B cell (primary cell): ENCODE measurements at regions of chr15 and their contacts with region 1.

Region 1: GRCh38 chr15:31265871-31266711 is 60.5 kb upstream of the KLF13 start:
- DNase-seq: peak; percentile 80
- ATAC-seq: peak; percentile 64
- H3K4me3 ChIP-seq: peak overlapping the region in 4 of 5 experiments; percentile 2 to 37 (median 4)
- H3K4me3 Mint-ChIP-seq: peak overlapping the region; percentile 79
- H3K27ac ChIP-seq: peak overlapping the region; percentile 78 to 90
- H3K27ac Mint-ChIP-seq: peak overlapping the region; percentile 96
- H3K4me1 ChIP-seq: peaks cover 70 to 79% of the 10 kb centered on the region in 2 donors
- H3K4me1 Mint-ChIP-seq: peaks cover 79% of the 10 kb centered on the region
- H3K27me3 ChIP-seq: no peaks in the 10 kb centered on the region
- H3K27me3 Mint-ChIP-seq: no peaks in the 10 kb centered on the region
- CTCF ChIP-seq: no peak

Region 2: DNA sequence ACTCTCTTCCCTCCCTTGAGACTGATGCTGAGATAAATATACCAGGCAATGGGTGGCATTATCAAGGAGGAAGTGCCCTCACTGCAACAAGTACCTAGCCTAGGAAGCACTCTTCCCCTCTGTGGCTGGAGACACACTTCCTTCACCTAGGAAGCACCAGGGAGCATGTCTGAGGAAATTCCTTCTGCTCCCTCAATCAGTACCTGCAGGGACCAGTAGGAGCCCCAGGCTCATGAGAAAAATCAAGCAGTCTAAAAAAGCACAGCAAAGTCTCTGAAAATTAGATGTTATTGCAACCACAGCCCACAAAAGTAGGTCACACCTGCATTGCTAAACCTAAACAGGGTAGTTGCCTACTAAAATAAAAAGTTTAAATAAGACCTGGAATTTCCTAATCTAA is 86.4 kb before region 1 on chr15:
- CTCF ChIA-PET with region 1: no interaction called
- POLR2A ChIA-PET with region 1: no interaction called
- intact Hi-C with region 1: no loop called
- DNase-seq: no peak
- ATAC-seq: no peak
- H3K4me3 ChIP-seq: no peak overlapping the region
- H3K4me3 Mint-ChIP-seq: no peak overlapping the region
- H3K27ac ChIP-seq: no peak overlapping the region
- H3K27ac Mint-ChIP-seq: peak overlapping the region; percentile 7
- H3K4me1 ChIP-seq: no peaks in the 10 kb centered on the region
- H3K4me1 Mint-ChIP-seq: peaks cover 2% of the 10 kb centered on the region
- H3K27me3 ChIP-seq: no peaks in the 10 kb centered on the region
- H3K27me3 Mint-ChIP-seq: peaks cover 7% of the 10 kb centered on the region
- CTCF ChIP-seq: no peak

Region 3: DNA sequence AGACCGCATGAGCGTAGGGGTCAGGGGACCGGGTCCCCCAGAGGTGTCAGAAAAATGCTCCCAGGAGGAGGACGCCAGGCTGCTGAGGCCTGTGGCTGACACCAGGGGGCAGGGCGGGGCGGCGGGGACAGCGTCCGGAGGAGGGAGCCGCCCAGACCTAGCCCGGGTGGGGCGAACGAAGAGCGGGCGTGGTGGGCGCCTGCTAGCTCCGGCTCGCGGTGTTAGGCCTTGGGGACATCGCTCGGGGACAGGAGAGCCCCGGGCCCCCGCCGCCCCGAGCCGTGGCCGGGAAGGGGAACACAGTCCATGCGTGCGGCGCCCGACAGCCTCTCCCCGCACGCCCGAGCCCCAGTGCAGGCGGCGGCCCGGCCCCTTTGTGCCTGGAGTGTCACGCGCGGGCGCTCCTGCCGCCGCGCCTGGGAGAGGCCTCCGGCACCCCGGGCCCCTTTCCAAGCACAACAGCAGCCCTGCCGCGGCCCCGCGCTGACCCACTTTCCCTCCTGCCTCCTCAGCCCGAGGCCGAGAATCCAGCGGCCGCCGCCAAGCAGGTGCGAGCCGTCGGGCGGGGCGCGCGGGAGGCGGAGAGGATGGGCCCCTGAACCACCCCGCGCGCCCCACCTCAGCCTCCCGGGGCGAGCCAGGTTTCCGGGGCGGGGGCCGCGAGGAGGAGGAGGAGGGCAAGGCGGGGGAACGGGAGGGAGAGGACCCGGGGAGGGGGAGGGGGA is 50.4 kb before region 1 on chr15:
- CTCF ChIA-PET with region 1: interaction called, 49 read pairs
- POLR2A ChIA-PET with region 1: interaction called, 25 read pairs
- intact Hi-C with region 1: loop called (anchors 1 kb)
- DNase-seq: peak; percentile 90
- ATAC-seq: peak; percentile 82
- H3K4me3 ChIP-seq: peak overlapping the region in 4 of 5 experiments; percentile 35 to 72 (median 66)
- H3K4me3 Mint-ChIP-seq: peak overlapping the region; percentile 87
- H3K27ac ChIP-seq: peak overlapping the region; percentile 66 to 79
- H3K27ac Mint-ChIP-seq: peak overlapping the region; percentile 87
- H3K4me1 ChIP-seq: peaks cover 14 to 25% of the 10 kb centered on the region in 2 donors
- H3K4me1 Mint-ChIP-seq: peaks cover 23% of the 10 kb centered on the region
- H3K27me3 ChIP-seq: no peaks in the 10 kb centered on the region
- H3K27me3 Mint-ChIP-seq: no peaks in the 10 kb centered on the region
- CTCF ChIP-seq: peak; percentile 96

Region 4: GRCh38 chr15:31236184-31237042 is 29.7 kb before region 1 on chr15:
- CTCF ChIA-PET with region 1: interaction called, 60 read pairs
- POLR2A ChIA-PET with region 1: interaction called, 40 read pairs
- intact Hi-C with region 1: loop called (anchors 1 kb)
- DNase-seq: no peak
- ATAC-seq: no peak
- H3K4me3 ChIP-seq: no peak overlapping the region
- H3K4me3 Mint-ChIP-seq: no peak overlapping the region
- H3K27ac ChIP-seq: no peak overlapping the region
- H3K27ac Mint-ChIP-seq: no peak overlapping the region
- H3K4me1 ChIP-seq: peaks cover 23 to 53% of the 10 kb centered on the region in 2 donors
- H3K4me1 Mint-ChIP-seq: peaks cover 66% of the 10 kb centered on the region
- H3K27me3 ChIP-seq: no peaks in the 10 kb centered on the region
- H3K27me3 Mint-ChIP-seq: no peaks in the 10 kb centered on the region
- CTCF ChIP-seq: no peak

Region 5: GRCh38 chr15:31285772-31286261 is 19.7 kb after region 1 on chr15:
- CTCF ChIA-PET with region 1: interaction called, 13 read pairs
- POLR2A ChIA-PET with region 1: interaction called, 5 read pairs
- intact Hi-C with region 1: no loop called
- DNase-seq: no peak
- ATAC-seq: no peak
- H3K4me3 ChIP-seq: no peak overlapping the region
- H3K4me3 Mint-ChIP-seq: no peak overlapping the region
- H3K27ac ChIP-seq: no peak overlapping the region
- H3K27ac Mint-ChIP-seq: no peak overlapping the region
- H3K4me1 ChIP-seq: no peaks in the 10 kb centered on the region
- H3K4me1 Mint-ChIP-seq: peaks cover 7% of the 10 kb centered on the region
- H3K27me3 ChIP-seq: no peaks in the 10 kb centered on the region
- H3K27me3 Mint-ChIP-seq: no peaks in the 10 kb centered on the region
- CTCF ChIP-seq: no peak

Region 6: DNA sequence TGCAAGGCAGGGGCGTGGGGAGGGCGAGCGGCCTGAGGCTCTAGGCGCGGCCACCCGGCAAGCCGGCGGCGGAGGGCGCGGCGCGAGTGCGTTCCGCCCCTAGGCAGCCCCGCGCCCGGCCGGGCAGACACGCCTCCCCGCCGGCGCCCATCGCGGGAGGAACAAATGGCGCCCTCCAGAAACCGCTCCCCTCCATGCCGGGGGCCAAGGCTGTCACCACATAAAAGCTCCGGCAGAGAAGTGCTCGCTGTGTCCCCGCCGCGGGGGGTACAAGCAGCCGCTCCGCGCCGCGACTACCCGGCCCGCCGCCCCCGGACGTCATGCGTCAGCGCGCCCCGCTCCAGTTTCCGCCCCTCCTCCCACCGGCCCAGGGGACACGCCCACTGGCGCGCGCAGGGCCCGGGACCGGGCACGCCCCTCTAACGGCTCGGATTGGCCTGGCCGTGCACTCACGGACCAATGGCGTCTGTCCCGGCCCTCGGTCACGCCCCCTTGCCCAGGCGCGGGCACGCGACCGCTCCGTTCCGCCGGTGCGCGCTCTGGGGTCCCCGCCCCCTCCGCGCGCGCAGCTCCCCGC is 60.2 kb after region 1 on chr15:
- CTCF ChIA-PET with region 1: interaction called, 21 read pairs
- POLR2A ChIA-PET with region 1: interaction called, 137 read pairs
- intact Hi-C with region 1: loop called (anchors 1 kb)
- DNase-seq: peak; percentile 100
- ATAC-seq: peak; percentile 70
- H3K4me3 ChIP-seq: peak overlapping the region; percentile 11 to 89 (median 80)
- H3K4me3 Mint-ChIP-seq: peak overlapping the region; percentile 95
- H3K27ac ChIP-seq: peak overlapping the region; percentile 79 to 97
- H3K27ac Mint-ChIP-seq: peak overlapping the region; percentile 99
- H3K4me1 ChIP-seq: peaks cover 49 to 59% of the 10 kb centered on the region in 2 donors
- H3K4me1 Mint-ChIP-seq: peaks cover 62% of the 10 kb centered on the region
- H3K27me3 ChIP-seq: no peaks in the 10 kb centered on the region
- H3K27me3 Mint-ChIP-seq: no peaks in the 10 kb centered on the region
- CTCF ChIP-seq: no peak

Region 7: DNA sequence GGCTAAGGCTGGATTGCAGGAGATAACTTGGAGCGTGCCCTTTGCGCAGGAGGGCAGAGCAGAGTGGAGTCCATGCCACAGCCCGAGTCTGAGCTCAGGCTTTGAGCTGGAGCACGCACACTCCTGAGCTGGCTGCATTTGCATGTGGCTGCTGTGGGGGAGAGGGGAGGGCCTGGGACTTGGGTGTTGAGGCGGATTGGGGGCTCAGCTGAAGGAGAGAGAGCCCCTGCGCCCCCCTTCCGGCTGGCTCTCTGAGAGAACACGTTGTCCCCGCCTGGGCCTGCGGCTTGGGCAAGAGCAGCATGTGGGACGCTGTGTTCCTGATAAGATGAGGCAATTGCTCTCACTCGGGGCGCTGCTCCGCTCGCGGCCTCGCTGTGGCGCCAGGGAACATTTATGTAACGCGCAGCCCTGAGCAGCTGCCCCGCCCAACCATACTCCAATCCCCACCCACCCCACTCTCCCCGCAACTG is 99.6 kb after region 1 on chr15:
- CTCF ChIA-PET with region 1: interaction called, 19 read pairs
- POLR2A ChIA-PET with region 1: interaction called, 4 read pairs
- intact Hi-C with region 1: loop called (anchors 1 kb)
- DNase-seq: peak; percentile 79
- ATAC-seq: peak; percentile 31
- H3K4me3 ChIP-seq: peak overlapping the region in 4 of 5 experiments; percentile 5 to 33 (median 15)
- H3K4me3 Mint-ChIP-seq: peak overlapping the region; percentile 80
- H3K27ac ChIP-seq: no peak overlapping the region
- H3K27ac Mint-ChIP-seq: peak overlapping the region; percentile 93
- H3K4me1 ChIP-seq: peaks cover 85 to 87% of the 10 kb centered on the region in 2 donors
- H3K4me1 Mint-ChIP-seq: peaks cover 95% of the 10 kb centered on the region
- H3K27me3 ChIP-seq: no peaks in the 10 kb centered on the region
- H3K27me3 Mint-ChIP-seq: no peaks in the 10 kb centered on the region
- CTCF ChIP-seq: peak; percentile 59